HEK293T (cell line): ENCODE measurements at regions of chr7 and their contacts with region 1.

Region 1: DNA sequence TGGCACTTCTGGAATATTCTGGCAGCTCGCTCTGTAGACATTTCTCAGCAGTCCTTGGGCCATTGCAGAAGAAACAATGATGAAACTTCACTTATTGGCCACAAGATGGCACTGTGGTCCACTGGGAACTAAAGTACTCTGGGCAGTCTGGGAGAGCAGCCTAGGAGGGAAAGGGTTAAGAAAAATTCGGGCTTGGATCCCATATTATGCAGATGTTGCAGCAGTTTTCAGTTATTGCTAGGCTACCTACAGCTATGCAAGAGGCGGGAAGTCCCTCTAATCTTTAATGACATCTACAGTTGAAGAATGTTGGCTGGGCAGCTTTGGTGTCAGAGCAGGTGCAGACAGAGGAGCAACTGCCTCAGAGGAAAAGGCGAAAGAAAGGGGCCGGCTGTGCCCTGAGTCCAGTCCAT is 201.7 kb upstream of the PRSS58 start:
- DNase-seq: peak; percentile 71

Region 2: DNA sequence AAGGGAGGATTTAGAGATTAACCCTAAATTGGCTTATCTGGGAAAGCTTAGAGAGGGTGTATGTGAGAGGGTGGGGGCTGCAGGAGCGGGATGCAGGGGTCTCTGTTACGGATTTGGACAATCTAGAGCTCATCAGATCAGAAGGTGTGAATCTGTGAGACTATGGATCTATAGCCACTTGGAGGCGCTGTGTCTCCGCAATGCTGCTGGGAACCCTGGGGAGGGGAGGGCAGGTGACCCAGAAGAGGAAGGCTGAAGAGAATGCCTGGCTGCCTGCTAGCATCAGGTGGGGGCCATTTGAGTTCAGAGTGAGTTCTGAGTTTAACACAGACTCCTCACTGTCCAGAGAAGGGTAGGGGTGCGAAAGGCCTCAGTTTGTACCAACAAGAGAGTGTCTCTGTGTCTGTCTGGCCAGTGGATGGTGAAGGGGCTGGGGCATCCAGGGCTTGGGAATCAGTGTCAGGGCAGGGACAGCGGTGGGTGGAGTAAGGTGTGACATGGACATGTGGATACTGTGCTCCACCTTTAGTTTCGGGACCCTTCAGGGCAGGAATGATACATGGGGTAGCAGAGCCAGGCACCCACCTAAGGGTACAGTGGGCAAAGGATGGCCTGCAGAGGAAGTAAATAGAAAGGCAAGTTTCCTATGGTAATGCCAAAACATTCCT is 14.4 kb before region 1 on chr7:
- CTCF ChIA-PET with region 1: interaction called, 11 read pairs
- POLR2A ChIA-PET with region 1: no interaction called
- DNase-seq: peak; percentile 44